ENCODE measurements at regions of chr12 and their contacts with region 1.

Region 1: DNA sequence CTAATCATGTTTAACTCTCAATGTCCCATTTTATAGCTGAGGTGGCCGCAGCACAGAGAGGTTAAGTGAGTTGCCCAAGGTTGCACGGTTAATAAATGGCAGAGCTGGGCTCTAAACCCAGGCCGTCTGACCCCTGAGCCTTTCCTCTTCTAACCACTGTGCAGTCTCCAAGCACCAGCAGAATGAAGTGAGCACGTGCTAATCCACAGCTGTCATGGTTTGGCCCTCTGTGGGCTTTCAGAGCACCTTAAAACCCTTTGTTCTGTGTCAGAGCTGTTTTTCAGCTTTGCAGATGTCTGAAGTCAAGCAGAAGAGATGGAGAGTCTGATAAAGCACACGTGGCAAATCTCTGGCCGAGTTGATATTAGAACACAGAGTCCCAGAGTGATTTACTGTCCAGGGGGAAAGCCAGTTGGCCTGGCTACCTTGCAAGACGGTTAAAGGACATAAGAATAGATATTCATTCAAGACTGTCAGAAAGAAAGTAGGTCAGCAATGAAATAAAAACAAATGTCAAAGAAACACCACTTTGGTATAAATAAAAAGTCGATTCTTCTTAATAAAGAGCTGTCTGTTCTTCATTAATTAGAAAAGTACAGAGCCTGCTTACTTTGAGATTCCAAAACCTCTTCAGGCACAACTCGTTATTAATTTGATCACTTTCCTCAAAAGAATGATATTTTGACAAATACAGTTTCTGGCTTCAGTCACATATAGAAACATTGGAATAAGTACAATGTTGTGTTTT is 107.3 kb downstream of the CRADD start:
- DNase-seq: peak; percentile 95
- H3K4me3 ChIP-seq: peak overlapping the region in 3 of 4 donors; percentile 11 to 21 (median 11)
- H3K27ac ChIP-seq: peak overlapping the region; percentile 77 to 83 (median 80)
- H3K4me1 ChIP-seq: peaks cover 43 to 64% (median 56%) of the 10 kb centered on the region in 4 donors
- H3K27me3 ChIP-seq: no peaks in the 10 kb centered on the region
- CTCF ChIP-seq: no peak
- EP300 ChIP-seq: peak; percentile 88
- POLR2A ChIP-seq: no peak

Region 2: DNA sequence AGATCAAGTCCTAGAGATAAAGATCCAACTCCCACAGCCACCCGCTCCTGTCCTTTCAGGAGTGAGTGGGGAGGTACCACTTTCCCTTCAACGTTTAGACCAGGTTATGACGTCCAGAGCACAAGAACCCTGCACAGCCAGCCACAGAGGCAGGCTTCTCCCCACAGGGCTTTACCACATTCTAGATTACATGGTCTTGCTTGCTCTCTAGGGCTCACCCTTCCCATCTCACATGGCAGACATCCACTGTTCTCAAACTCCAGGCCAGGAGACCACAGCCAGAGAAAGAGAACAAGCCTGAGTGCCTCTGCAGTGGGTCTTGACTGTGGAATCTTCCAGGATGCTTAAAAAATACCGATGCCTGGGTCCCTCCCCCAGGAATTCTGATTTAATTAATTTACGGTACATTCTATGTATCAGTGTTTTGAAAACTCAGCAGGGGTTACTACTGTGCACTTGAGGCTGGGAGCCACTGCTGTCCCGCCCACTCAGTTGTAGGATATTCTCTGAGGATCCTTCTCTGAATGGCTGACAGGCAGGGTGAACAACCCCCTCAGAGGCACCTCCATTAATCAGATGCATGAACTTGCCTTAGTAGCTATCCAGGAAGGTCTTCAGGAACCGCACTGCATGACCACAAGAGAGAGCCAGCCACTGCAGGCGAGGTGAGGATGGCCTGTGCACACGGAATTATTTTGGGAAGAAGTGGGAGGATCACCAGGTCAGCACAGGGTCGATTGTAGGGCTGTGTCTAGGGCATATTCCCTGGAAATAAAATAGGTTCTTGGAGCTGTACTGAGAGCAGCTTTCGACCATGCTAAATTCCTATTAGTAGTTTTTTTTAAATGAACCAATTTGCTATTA is 233.5 kb before region 1 on chr12:
- intact Hi-C with region 1: no loop called
- DNase-seq: peak; percentile 89
- H3K4me3 ChIP-seq: no peak overlapping the region
- H3K27ac ChIP-seq: no peak overlapping the region
- H3K4me1 ChIP-seq: no peaks in the 10 kb centered on the region
- H3K27me3 ChIP-seq: no peaks in the 10 kb centered on the region
- CTCF ChIP-seq: no peak
- EP300 ChIP-seq: no peak
- POLR2A ChIP-seq: no peak

Region 3: GRCh38 chr12:93813972-93814821 is 29.7 kb after region 1 on chr12:
- intact Hi-C with region 1: loop called (anchors 5 kb)
- DNase-seq: peak; percentile 95
- H3K4me3 ChIP-seq: peak overlapping the region in 3 of 4 donors; percentile 8 to 28 (median 17)
- H3K27ac ChIP-seq: peak overlapping the region; percentile 82 to 89 (median 86)
- H3K4me1 ChIP-seq: peaks cover 55 to 81% (median 79%) of the 10 kb centered on the region in 4 donors
- H3K27me3 ChIP-seq: no peaks in the 10 kb centered on the region
- CTCF ChIP-seq: peak in 1 of 3 experiments; percentile 19
- EP300 ChIP-seq: peak; percentile 85
- POLR2A ChIP-seq: peak; percentile 8